Mammary epithelial cell (primary cell): ENCODE measurements at regions of chr3 and their contacts with region 1.

Region 1: DNA sequence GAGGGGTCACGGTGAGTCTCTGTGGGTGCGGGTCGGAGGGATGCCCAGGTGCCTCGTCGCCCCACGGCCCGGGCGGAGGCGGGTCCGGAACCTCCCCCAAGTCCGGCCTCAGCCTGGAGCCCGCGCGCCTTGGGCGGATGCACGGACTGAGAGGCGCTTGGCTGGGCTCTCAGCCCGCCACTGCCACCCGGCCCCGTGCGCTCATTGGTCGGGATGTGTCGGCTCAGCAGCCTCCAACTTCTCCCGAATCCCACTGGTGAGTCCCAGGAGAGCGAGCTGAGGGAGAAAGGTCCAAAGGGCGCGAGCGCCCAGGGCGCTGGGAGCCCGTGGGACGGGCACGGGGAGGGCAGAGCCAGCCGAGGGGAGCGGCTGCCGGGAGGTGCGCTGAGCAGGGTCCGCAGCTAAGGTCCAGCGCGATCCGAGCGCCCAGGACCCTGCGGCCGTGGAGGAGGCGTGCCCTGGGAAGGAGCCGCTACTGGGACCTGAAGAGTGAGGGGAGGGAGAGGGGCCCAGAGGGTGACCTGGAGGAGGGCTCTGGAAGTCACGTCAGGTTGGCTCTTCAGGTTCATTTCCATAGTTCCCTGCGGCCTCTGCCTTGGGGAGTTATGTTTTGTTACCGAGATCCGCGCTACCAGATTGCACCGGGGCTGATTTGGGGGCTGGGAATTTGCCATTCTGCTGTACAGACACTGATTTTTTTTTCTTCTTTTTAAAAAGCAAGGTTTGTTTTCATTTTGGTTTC is at the start of gene MME:
- DNase-seq: peak; percentile 69
- H3K4me3 ChIP-seq: peak within 1 kb of the TSS; percentile 77 to 87 (median 86)
- H3K27ac ChIP-seq: no peak within 1 kb of the TSS
- H3K4me1 ChIP-seq: peaks cover 16% of the 10 kb centered on the region
- H3K27me3 ChIP-seq: no peaks in the 10 kb centered on the region
- CTCF ChIP-seq: no peak
- total RNA-seq, gene MME: 22.5 to 94.5 TPM

Region 2: GRCh38 chr3:154954753-154955152 is 125.2 kb before region 1 on chr3:
- CTCF ChIA-PET with region 1: interaction called, 4 read pairs
- dilution Hi-C with region 1: no loop called
- in situ Hi-C with region 1: no loop called
- intact Hi-C with region 1: loop called (anchors 1 kb)
- DNase-seq: peak; percentile 40
- H3K4me3 ChIP-seq: no peak overlapping the region
- H3K27ac ChIP-seq: no peak overlapping the region
- H3K4me1 ChIP-seq: no peaks in the 10 kb centered on the region
- H3K27me3 ChIP-seq: no peaks in the 10 kb centered on the region
- CTCF ChIP-seq: peak; percentile 59 to 78

Region 3: DNA sequence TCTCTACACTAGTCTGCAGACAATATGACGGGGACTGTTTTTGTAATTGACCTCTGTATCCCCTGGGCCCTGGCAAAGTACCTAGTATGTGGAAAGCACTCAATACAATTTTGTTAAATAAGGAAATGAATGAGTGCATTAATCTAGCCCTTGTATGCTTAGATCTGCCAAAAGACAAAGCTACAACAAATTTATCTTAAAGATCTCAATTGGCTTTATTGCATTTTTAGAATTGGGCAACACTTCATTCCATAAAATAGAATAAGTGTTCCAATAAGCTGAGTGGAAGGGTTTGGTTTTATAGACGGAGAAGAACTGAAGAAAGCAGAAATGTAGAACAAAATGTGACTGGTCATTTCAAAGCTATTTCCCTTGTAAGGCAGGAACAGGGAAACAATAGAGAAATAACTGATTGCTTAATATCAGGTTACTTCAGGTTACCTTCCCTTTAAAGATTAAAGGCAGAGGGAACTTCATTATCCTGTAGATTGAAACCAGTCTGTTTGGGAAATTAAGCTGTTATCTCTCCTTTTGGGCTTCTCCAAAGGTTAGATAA is 108.1 kb before region 1 on chr3:
- CTCF ChIA-PET with region 1: no interaction called
- dilution Hi-C with region 1: no loop called
- in situ Hi-C with region 1: no loop called
- intact Hi-C with region 1: loop called (anchors 5 kb)
- DNase-seq: peak; percentile 82
- H3K4me3 ChIP-seq: peak overlapping the region in 2 of 3 experiments; percentile 1 to 3
- H3K27ac ChIP-seq: peak overlapping the region; percentile 83
- H3K4me1 ChIP-seq: peaks cover 36% of the 10 kb centered on the region
- H3K27me3 ChIP-seq: no peaks in the 10 kb centered on the region
- CTCF ChIP-seq: no peak

Region 4: GRCh38 chr3:155270485-155271342 is 190.8 kb after region 1 on chr3:
- CTCF ChIA-PET with region 1: no interaction called
- dilution Hi-C with region 1: no loop called
- in situ Hi-C with region 1: no loop called
- intact Hi-C with region 1: no loop called
- DNase-seq: peak; percentile 32
- H3K4me3 ChIP-seq: no peak overlapping the region
- H3K27ac ChIP-seq: no peak overlapping the region
- H3K4me1 ChIP-seq: peaks cover 12% of the 10 kb centered on the region
- H3K27me3 ChIP-seq: no peaks in the 10 kb centered on the region
- CTCF ChIP-seq: no peak

Region 5: GRCh38 chr3:155418407-155418806 is 338.5 kb after region 1 on chr3:
- CTCF ChIA-PET with region 1: no interaction called
- dilution Hi-C with region 1: no loop called
- in situ Hi-C with region 1: no loop called
- intact Hi-C with region 1: no loop called
- DNase-seq: no peak
- H3K4me3 ChIP-seq: no peak overlapping the region
- H3K27ac ChIP-seq: no peak overlapping the region
- H3K4me1 ChIP-seq: peaks cover 25% of the 10 kb centered on the region
- H3K27me3 ChIP-seq: no peaks in the 10 kb centered on the region
- CTCF ChIP-seq: no peak

Region 6: DNA sequence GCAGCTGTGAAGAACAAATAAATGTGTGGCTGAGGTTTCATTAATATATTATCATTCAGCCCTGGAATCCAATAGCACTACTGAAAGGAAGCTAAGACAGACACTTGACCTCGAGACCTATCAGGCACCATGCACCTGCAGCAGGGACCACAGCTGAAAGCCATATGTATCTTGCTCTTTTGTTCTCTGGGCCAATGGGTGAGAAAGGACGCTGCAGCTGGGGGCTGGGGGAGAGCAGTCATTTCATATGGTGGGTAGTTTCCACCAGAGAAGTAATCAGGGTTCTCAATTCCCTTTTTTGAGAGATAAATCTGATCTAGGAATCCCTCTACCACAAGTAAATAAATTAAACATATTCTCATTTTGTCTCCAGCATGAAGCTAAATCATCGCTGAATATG is 439.2 kb after region 1 on chr3:
- CTCF ChIA-PET with region 1: no interaction called
- dilution Hi-C with region 1: no loop called
- in situ Hi-C with region 1: no loop called
- intact Hi-C with region 1: no loop called
- DNase-seq: no peak
- H3K4me3 ChIP-seq: no peak overlapping the region
- H3K27ac ChIP-seq: no peak overlapping the region
- H3K4me1 ChIP-seq: peaks cover 8% of the 10 kb centered on the region
- H3K27me3 ChIP-seq: no peaks in the 10 kb centered on the region
- CTCF ChIP-seq: no peak

Region 7: DNA sequence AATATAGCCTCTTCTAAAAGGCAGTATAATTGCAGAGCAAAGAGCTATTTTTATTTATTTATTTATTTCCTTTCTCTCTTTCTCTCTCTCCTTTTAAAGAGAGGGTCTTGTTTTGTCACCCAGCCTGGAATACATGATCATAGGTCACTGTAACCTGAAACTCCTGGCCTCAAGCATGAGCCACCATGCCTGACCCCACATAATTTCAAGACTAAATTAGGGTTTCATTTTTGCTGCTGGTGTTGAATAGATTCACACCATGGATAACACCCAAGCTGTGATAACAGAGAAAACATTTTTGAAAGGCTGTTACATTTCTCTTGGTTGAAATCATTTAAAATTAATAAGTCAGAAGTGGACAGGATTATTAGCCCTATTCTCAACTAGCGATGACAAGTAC is 1877.8 kb after region 1 on chr3:
- CTCF ChIA-PET with region 1: no interaction called
- dilution Hi-C with region 1: no loop called
- in situ Hi-C with region 1: no loop called
- intact Hi-C with region 1: loop called (anchors 10 kb)
- DNase-seq: no peak
- H3K4me3 ChIP-seq: no peak overlapping the region
- H3K27ac ChIP-seq: no peak overlapping the region
- H3K4me1 ChIP-seq: no peaks in the 10 kb centered on the region
- H3K27me3 ChIP-seq: no peaks in the 10 kb centered on the region
- CTCF ChIP-seq: no peak